ENCODE measurements at regions of chr9 and their contacts with region 1.

Region 1: GRCh38 chr9:114108016-114108833 is 9.1 kb upstream of the KIF12 start:
- DNase-seq: peak; percentile 52
- ATAC-seq: peak; percentile 100
- H3K4me3 ChIP-seq: no peak overlapping the region
- H3K27ac ChIP-seq: no peak overlapping the region
- H3K4me1 ChIP-seq: no peaks in the 10 kb centered on the region
- H3K27me3 ChIP-seq: 0 out of 2 replicates have a peak, but pooled peaks cover 7% of the 10 kb centered on the region
- CTCF ChIP-seq: peak; percentile 91 to 99 (median 96)
- POLR2A ChIP-seq: no peak
- RAD21 ChIP-seq: peak; percentile 96

Region 2: GRCh38 chr9:114082017-114082762 is 26.0 kb before region 1 on chr9:
- CTCF ChIA-PET with region 1: interaction called, 20 read pairs
- POLR2A ChIA-PET with region 1: no interaction called
- RAD21 ChIA-PET with region 1: interaction called in 1 of 2 experiments, 7 read pairs
- intact Hi-C with region 1: no loop called
- DNase-seq: peak; percentile 70
- ATAC-seq: peak; percentile 97
- H3K4me3 ChIP-seq: no peak overlapping the region
- H3K27ac ChIP-seq: no peak overlapping the region
- H3K4me1 ChIP-seq: no peaks in the 10 kb centered on the region
- H3K27me3 ChIP-seq: no peaks in the 10 kb centered on the region
- CTCF ChIP-seq: peak; percentile 86 to 91 (median 87)
- POLR2A ChIP-seq: no peak
- RAD21 ChIP-seq: peak; percentile 91

Region 3: GRCh38 chr9:114271641-114272081 is 163.4 kb after region 1 on chr9:
- CTCF ChIA-PET with region 1: interaction called, 17 read pairs
- POLR2A ChIA-PET with region 1: no interaction called
- RAD21 ChIA-PET with region 1: interaction called, 3 to 6 read pairs
- intact Hi-C with region 1: loop called (anchors 5 kb)
- DNase-seq: peak; percentile 28
- ATAC-seq: peak; percentile 88
- H3K4me3 ChIP-seq: no peak overlapping the region
- H3K27ac ChIP-seq: no peak overlapping the region
- H3K4me1 ChIP-seq: peaks cover under 1 to 4% of the 10 kb centered on the region in 2 experiments; a peak in 2 of 4 replicates
- H3K27me3 ChIP-seq: no peaks in the 10 kb centered on the region
- CTCF ChIP-seq: peak; percentile 49 to 68 (median 57); a peak in 5 of 6 replicates
- POLR2A ChIP-seq: no peak
- RAD21 ChIP-seq: peak; percentile 75

Region 4: DNA sequence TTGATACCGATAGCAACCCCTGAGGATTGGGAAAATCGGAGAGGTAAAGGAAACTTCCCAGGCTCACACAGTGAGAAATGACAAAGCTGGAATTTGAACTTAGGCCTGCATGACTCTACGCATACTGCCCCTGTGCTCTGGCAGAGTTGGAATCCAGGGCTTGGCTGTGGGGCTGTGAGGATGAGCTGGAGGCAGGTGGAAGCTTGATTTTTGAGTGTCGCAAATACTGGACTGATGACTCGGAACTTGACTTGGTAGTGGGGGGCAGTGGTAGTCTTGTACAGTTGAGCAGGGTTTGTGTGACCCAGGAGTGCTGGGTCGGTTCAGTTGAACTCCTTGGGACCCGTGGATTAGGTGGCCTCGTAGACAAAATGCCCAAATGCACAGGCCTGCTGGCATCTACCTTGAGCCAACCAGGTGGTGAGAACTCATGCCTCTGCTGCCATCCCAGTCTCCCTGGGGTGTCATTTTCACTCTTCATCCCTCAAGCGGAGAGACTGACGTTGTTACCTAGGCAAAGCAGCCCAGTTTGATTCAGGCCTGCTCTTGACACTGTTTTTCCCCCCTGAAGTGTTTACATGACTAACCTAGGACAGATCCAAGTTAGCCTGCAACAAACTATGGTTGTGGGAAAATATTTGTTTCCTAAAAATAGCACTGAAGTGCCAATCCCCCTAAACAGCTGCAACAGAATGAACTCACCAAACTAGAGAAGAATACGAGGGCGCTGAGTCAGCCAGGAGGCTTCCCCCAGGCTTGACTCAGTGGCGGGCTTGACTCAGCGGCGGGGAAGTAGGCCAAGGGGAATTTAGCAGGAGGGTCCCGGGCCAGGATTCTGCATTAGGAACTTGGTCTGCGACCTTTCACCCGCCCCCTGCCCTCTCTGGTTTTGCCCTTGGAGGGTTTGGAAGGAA is 168.9 kb after region 1 on chr9:
- CTCF ChIA-PET with region 1: interaction called, 17 read pairs
- POLR2A ChIA-PET with region 1: no interaction called
- RAD21 ChIA-PET with region 1: interaction called in 1 of 2 experiments, 6 read pairs
- intact Hi-C with region 1: loop called (anchors 5 kb)
- DNase-seq: no peak
- ATAC-seq: no peak
- H3K4me3 ChIP-seq: no peak overlapping the region
- H3K27ac ChIP-seq: peak overlapping the region; percentile 37; the same call in 1 of the 2 replicates
- H3K4me1 ChIP-seq: peaks cover 24 to 37% of the 10 kb centered on the region in 2 experiments
- H3K27me3 ChIP-seq: no peaks in the 10 kb centered on the region
- CTCF ChIP-seq: no peak
- POLR2A ChIP-seq: no peak
- RAD21 ChIP-seq: no peak

Region 5: GRCh38 chr9:114291064-114291474 is 182.8 kb after region 1 on chr9:
- CTCF ChIA-PET with region 1: interaction called, 120 read pairs
- POLR2A ChIA-PET with region 1: no interaction called
- RAD21 ChIA-PET with region 1: interaction called, 16 to 19 read pairs
- intact Hi-C with region 1: loop called (anchors 1 kb)
- DNase-seq: peak; percentile 51
- ATAC-seq: peak; percentile 85
- H3K4me3 ChIP-seq: no peak overlapping the region
- H3K27ac ChIP-seq: no peak overlapping the region
- H3K4me1 ChIP-seq: no peaks in the 10 kb centered on the region
- H3K27me3 ChIP-seq: no peaks in the 10 kb centered on the region
- CTCF ChIP-seq: peak; percentile 80 to 95 (median 95)
- POLR2A ChIP-seq: no peak
- RAD21 ChIP-seq: peak; percentile 95

Region 6: DNA sequence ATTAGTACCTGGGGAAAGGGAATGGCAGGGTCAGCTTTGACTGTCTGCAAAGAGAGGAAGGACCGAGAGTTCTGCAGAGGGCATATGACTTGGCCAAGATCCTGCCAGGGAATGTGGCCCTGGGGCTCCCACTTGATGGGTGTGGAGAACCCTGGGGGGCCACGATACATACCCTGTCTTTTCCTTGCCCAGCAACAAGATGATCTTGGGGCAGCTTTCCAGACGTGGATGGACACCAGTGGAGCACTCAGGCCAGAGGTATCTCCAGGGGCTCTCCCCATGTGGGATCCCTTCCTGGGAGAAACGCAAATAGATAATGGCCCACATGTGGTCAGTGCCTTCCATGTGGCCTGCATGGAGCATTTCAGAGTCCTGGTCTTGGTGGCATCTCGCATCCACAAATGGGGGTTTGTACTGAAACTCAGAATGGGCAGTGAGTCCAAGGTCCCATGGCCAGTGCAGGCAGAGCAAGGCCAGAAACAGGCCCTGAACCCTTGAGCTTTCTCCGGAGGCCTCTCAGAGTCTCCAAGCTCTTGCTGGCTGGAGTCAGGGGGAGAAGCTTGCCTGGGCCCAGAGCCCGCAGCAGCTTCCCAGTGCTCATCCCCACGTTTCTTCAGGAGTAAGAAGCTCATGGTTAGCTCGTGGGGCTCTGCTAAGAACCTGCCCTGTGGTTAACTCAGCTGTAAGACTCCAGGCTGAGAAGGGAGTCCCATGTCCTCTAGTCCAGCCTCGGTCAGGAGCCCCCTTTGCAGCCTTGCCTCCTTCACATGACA is 196.4 kb after region 1 on chr9:
- CTCF ChIA-PET with region 1: no interaction called
- POLR2A ChIA-PET with region 1: no interaction called
- RAD21 ChIA-PET with region 1: interaction called in 1 of 2 experiments, 3 read pairs
- intact Hi-C with region 1: loop called (anchors 1 kb)
- DNase-seq: no peak
- ATAC-seq: no peak
- H3K4me3 ChIP-seq: no peak overlapping the region
- H3K27ac ChIP-seq: no peak overlapping the region
- H3K4me1 ChIP-seq: peaks cover 0 to 3% of the 10 kb centered on the region in 2 experiments; a peak in 1 of 4 replicates
- H3K27me3 ChIP-seq: no peaks in the 10 kb centered on the region
- CTCF ChIP-seq: no peak
- POLR2A ChIP-seq: no peak
- RAD21 ChIP-seq: no peak

Measured in HCT116 (cell line).